Heart right ventricle (tissue), 16 donors: ENCODE measurements at regions of chr6 and their contacts with region 1.

Region 1: GRCh38 chr6:75368151-75368779 is 83.7 kb upstream of the TMEM30A start:
- DNase-seq: peak in 1 of 2 donors; percentile 52
- ATAC-seq: peak; percentile 66 to 85 (median 82)
- H3K4me3 ChIP-seq: no peak overlapping the region
- H3K27ac ChIP-seq: peak overlapping the region in 9 of 10 donors; percentile 30 to 70 (median 51)
- H3K4me1 ChIP-seq: peaks cover 0 to 57% (median 31%) of the 10 kb centered on the region in 9 donors
- H3K27me3 ChIP-seq: no peaks in the 10 kb centered on the region
- CTCF ChIP-seq: peak; percentile 23 to 74 (median 59)

Region 2: DNA sequence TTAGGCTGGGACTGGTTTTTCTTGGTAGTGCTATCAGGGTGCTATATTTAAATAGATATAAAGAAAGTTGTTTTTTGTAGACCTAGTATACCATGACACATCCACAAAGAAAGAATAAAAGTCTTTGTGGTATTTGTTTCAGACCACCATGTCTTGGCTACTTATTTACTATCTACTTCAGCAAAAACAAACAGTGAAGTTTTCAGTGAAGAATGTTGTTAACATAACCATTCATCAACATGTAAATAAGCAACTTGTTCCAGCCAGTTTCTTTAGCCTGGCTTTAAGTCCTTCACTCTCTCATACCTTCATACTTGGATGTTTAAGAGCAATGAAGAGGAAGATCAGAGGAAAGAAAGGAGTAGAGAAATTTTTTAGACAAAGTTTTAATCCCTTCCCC is 1048.2 kb before region 1 on chr6:
- intact Hi-C with region 1: no loop called
- DNase-seq: no peak
- ATAC-seq: no peak
- H3K4me3 ChIP-seq: no peak overlapping the region
- H3K27ac ChIP-seq: no peak overlapping the region
- H3K4me1 ChIP-seq: peaks cover 0 to 5% (median 0%) of the 10 kb centered on the region in 9 donors
- H3K27me3 ChIP-seq: no peaks in the 10 kb centered on the region
- CTCF ChIP-seq: no peak

Region 3: GRCh38 chr6:75296811-75297779 is 71.2 kb before region 1 on chr6:
- intact Hi-C with region 1: loop called in 1 of 10 experiments (anchors 5 kb)
- DNase-seq: no peak
- ATAC-seq: peak in 7 of 8 donors; percentile 20 to 59 (median 39)
- H3K4me3 ChIP-seq: no peak overlapping the region
- H3K27ac ChIP-seq: no peak overlapping the region
- H3K4me1 ChIP-seq: peaks cover 0 to 32% (median 24%) of the 10 kb centered on the region in 9 donors
- H3K27me3 ChIP-seq: no peaks in the 10 kb centered on the region
- CTCF ChIP-seq: peak; percentile 60 to 86 (median 76)

Region 4: GRCh38 chr6:75317503-75318206 is 50.6 kb before region 1 on chr6:
- intact Hi-C with region 1: loop called in 1 of 10 experiments (anchors 5 kb)
- DNase-seq: no peak
- ATAC-seq: peak in 7 of 8 donors; percentile 41 to 64 (median 50)
- H3K4me3 ChIP-seq: no peak overlapping the region
- H3K27ac ChIP-seq: peak overlapping the region in 9 of 10 donors; percentile 3 to 73 (median 45)
- H3K4me1 ChIP-seq: peaks cover 8 to 22% (median 16%) of the 10 kb centered on the region in 9 donors
- H3K27me3 ChIP-seq: no peaks in the 10 kb centered on the region
- CTCF ChIP-seq: no peak

Region 5: GRCh38 chr6:75493400-75494064 is 125.3 kb after region 1 on chr6 and contains the start of gene FILIP1:
- intact Hi-C with region 1: loop called in 5 of 10 experiments (anchors 2 to 5 kb)
- DNase-seq: peak in 1 of 2 donors; percentile 86
- ATAC-seq: peak; percentile 87 to 96 (median 90)
- H3K4me3 ChIP-seq: peak within 1 kb of the TSS; percentile 38 to 71 (median 56)
- H3K27ac ChIP-seq: peak within 1 kb of the TSS; percentile 75 to 95 (median 90)
- H3K4me1 ChIP-seq: peaks cover 0 to 63% (median 49%) of the 10 kb centered on the region in 9 donors
- H3K27me3 ChIP-seq: no peaks in the 10 kb centered on the region
- CTCF ChIP-seq: no peak
- total RNA-seq, gene FILIP1: 112 to 269 (median 205) TPM

Region 6: DNA sequence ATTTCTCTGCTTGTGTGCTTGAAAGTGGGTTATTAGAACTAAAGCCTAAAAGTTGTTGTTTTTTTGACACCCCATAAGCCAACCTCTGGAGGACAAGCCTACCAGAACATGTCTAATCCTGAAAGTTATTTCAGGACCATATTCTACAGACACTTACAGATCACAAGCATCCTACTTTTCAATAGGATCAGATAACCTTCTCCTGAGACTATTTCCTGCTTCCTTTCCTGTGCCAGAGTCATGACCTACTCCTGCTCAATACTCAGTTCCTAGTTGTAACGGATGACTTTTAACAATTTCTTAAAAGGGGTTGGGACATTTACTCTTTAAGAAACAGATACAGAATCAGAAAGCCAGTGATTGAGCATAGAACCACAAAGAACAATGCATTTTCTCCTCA is 130.6 kb after region 1 on chr6:
- intact Hi-C with region 1: loop called in 7 of 10 experiments (anchors 2 to 10 kb)
- DNase-seq: no peak
- ATAC-seq: no peak
- H3K4me3 ChIP-seq: no peak overlapping the region
- H3K27ac ChIP-seq: peak overlapping the region in 2 of 10 donors; percentile 6 to 27
- H3K4me1 ChIP-seq: peaks cover 0 to 86% (median 39%) of the 10 kb centered on the region in 9 donors
- H3K27me3 ChIP-seq: no peaks in the 10 kb centered on the region
- CTCF ChIP-seq: no peak

Region 7: DNA sequence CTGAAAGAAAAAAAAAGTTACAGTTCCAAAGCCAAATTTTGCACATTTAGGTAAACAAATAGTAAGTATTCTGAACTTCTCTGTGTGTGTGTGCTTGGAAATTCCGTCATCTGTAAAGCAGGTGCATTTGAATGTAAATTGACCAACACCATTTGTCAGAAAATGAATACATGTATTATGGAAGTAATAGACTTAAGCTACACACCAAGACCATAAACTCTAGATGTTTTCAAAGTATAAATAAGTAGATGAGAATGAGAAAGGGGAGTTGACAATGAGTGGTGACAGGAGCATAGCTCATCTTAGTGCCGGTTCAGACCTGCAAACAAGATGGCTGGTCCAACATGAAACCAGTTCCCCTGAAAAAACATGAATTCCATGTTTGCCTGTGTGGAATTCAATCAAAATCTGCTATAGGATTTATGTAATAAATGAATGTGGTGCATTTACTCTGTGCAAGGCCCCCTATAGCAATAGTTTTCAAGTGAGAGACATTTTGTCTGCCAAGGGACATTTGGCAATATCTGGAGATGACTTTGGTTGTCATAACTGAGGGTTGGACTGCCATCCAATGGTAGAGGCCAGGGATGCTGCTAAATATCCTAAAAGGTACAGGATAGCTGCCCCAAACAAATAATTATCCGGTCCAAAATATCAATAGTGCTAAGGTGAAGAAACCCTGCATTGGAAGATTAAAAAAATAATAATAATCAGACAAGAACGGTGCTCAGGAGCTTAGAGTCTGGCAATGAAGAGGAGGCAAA is 136.4 kb after region 1 on chr6:
- intact Hi-C with region 1: loop called in 6 of 10 experiments (anchors 2 to 10 kb)
- DNase-seq: peak in 1 of 2 donors; percentile 25
- ATAC-seq: peak; percentile 71 to 90 (median 84)
- H3K4me3 ChIP-seq: no peak overlapping the region
- H3K27ac ChIP-seq: no peak overlapping the region
- H3K4me1 ChIP-seq: peaks cover 0 to 39% (median 3%) of the 10 kb centered on the region in 9 donors
- H3K27me3 ChIP-seq: no peaks in the 10 kb centered on the region
- CTCF ChIP-seq: peak in 8 of 9 donors; percentile 24 to 74 (median 53)

Region 8: GRCh38 chr6:75526502-75527127 is 158.3 kb after region 1 on chr6:
- intact Hi-C with region 1: loop called in 3 of 10 experiments (anchors 5 to 10 kb)
- DNase-seq: peak in 1 of 2 donors; percentile 75
- ATAC-seq: peak; percentile 68 to 92 (median 88)
- H3K4me3 ChIP-seq: no peak overlapping the region
- H3K27ac ChIP-seq: no peak overlapping the region
- H3K4me1 ChIP-seq: peaks cover 0 to 9% (median 0%) of the 10 kb centered on the region in 9 donors
- H3K27me3 ChIP-seq: no peaks in the 10 kb centered on the region
- CTCF ChIP-seq: peak; percentile 39 to 86 (median 79)